Heart left ventricle (tissue), 16 donors: ENCODE measurements at regions of chr3 and their contacts with region 1.

Region 1: GRCh38 chr3:64533617-64534317 is 154.0 kb downstream of the ADAMTS9 start:
- DNase-seq: peak; percentile 83 to 87 (median 85)
- ATAC-seq: peak; percentile 96 to 97 (median 96)
- H3K4me3 ChIP-seq: peak overlapping the region in 3 of 12 donors; percentile 12 to 34 (median 14)
- H3K27ac ChIP-seq: peak overlapping the region in 4 of 12 donors; percentile 20 to 60 (median 34)
- H3K4me1 ChIP-seq: peaks cover 0 to 14% (median 2%) of the 10 kb centered on the region in 12 donors
- H3K27me3 ChIP-seq: no peaks in the 10 kb centered on the region
- CTCF ChIP-seq: peak; percentile 61 to 94 (median 89)
- POLR2A ChIP-seq: no peak

Region 2: GRCh38 chr3:64612082-64612860 is 78.5 kb after region 1 on chr3:
- intact Hi-C with region 1: loop called in 1 of 10 experiments (anchors 5 kb)
- DNase-seq: peak in 4 of 5 donors; percentile 30 to 54 (median 50)
- ATAC-seq: peak; percentile 87 to 97 (median 96)
- H3K4me3 ChIP-seq: peak overlapping the region in 2 of 12 donors; percentile 6 to 10
- H3K27ac ChIP-seq: peak overlapping the region; percentile 60 to 86 (median 76)
- H3K4me1 ChIP-seq: peaks cover 0 to 46% (median 26%) of the 10 kb centered on the region in 12 donors
- H3K27me3 ChIP-seq: no peaks in the 10 kb centered on the region
- CTCF ChIP-seq: no peak
- POLR2A ChIP-seq: no peak

Region 3: GRCh38 chr3:64890006-64890405 is 356.2 kb after region 1 on chr3:
- intact Hi-C with region 1: loop called in 2 of 10 experiments (anchors 10 kb)
- DNase-seq: peak; percentile 72 to 83 (median 81)
- ATAC-seq: peak; percentile 46 to 90 (median 74)
- H3K4me3 ChIP-seq: no peak overlapping the region
- H3K27ac ChIP-seq: peak overlapping the region; percentile 28 to 83 (median 62)
- H3K4me1 ChIP-seq: peaks cover 0 to 46% (median 30%) of the 10 kb centered on the region in 12 donors
- H3K27me3 ChIP-seq: no peaks in the 10 kb centered on the region
- CTCF ChIP-seq: no peak
- POLR2A ChIP-seq: no peak

Region 4: DNA sequence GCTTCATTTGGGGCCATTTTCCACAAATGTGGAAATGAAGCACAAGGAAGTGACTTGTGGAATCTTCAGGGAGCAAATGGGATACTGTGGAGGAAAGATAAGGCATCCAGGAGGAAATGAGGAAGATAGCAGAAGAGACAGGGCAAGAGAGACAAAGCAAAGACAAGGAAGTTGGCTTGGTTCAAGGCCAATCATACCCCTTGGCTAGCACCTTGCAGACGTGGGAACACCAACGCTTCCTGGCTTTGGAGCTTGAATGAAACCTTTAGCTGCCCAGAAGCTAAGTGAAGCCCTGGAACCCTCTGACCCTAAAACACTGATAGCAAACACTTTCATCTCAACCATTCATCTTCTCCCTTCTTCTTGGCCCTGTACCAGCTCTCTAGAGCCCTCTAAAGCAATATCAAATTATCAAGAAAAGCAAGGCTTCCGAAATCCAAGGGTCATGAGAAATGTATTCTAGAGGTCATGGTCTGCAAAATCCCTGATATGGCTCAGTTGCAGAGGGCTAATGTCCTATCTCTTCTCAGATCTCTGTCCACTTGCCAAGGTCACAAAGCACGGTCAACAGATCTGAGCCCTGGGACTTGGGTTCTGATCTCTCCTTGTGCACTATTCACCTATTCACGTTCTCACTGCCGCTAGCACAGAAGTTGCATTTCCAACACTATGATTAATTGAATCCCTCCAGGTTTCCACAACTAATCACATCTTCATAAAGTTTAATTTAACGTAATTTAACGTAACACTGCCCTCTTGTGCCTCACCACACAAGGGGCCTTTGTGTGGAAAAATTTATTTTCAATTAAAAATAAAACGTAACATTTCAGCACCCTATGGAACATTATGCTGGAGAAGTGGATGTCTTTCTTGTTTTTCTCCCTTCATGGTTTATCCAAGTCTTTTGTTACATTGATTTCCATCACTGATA is 711.6 kb after region 1 on chr3:
- intact Hi-C with region 1: loop called (anchors 1 to 5 kb)
- DNase-seq: no peak
- ATAC-seq: peak in 3 of 4 donors; percentile 27 to 57 (median 51)
- H3K4me3 ChIP-seq: no peak overlapping the region
- H3K27ac ChIP-seq: no peak overlapping the region
- H3K4me1 ChIP-seq: peaks cover 0 to 10% (median 1%) of the 10 kb centered on the region in 12 donors
- H3K27me3 ChIP-seq: no peaks in the 10 kb centered on the region
- CTCF ChIP-seq: peak; percentile 27 to 66 (median 55)
- POLR2A ChIP-seq: no peak

Region 5: DNA sequence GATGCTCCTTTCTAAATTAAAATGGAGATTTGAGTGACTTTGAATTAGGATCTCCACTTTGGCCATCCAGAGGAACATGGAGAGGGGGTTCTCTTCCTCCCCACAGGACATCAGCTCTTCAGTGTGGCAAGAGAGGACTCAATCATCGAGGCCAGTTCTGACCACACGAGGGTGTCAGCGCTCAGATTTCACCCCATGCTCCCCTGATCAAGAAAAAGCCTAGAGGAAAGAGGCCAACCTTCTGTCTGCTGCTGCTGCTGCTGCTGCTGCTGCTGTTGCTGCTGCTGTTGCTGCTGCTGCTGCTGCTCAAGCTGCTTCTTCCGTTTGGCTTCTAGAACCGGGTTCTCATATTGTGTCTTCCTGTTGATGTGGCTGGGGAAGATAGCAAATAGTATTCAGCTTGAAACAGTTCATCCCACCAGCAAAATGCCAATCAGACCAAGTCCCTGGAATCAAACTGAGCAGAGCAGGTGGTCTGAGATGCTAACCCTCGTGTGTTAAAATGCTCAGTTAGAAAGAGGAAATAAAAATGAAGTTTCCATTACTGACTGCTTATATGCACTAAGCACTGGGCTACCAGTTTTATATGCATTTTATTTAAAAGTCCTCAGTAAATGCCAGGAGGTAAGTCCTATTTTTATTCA is 906.0 kb after region 1 on chr3:
- intact Hi-C with region 1: loop called in 1 of 10 experiments (anchors 5 kb)
- DNase-seq: peak in 4 of 5 donors; percentile 47 to 69 (median 62)
- ATAC-seq: peak; percentile 80 to 91 (median 90)
- H3K4me3 ChIP-seq: no peak overlapping the region
- H3K27ac ChIP-seq: no peak overlapping the region
- H3K4me1 ChIP-seq: peaks cover 0 to 10% (median 6%) of the 10 kb centered on the region in 12 donors
- H3K27me3 ChIP-seq: no peaks in the 10 kb centered on the region
- CTCF ChIP-seq: peak; percentile 30 to 77 (median 64)
- POLR2A ChIP-seq: no peak

Region 6: DNA sequence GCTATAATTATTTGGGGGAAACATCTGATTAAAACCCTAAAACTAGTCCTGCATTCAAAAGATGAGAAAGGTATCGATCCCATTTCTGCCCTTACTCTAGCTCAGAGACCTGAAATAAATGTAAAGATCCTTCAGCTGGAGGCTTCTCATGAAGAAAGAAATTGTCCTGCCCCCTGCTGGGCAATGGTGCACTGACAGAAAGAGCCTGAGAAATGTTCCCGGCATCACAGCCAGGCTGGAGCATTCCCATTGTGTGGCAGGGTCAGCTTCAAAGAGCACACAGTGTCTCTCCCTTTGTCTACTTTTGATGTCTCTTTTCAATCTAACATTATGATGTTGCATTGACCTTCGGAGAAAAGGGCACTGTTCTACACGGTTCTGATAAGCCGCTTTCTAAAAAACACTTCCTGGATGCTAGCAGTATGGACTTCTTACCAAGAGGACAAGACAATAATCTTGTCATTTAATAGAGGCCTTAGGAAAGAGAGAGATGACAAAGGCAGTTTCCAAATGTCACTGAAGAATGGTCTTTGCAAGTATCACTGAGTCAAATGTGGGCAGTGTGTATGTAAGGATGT is 1217.4 kb after region 1 on chr3:
- intact Hi-C with region 1: loop called in 1 of 10 experiments (anchors 10 kb)
- DNase-seq: peak in 4 of 5 donors; percentile 20 to 52 (median 42)
- ATAC-seq: peak; percentile 62 to 71 (median 66)
- H3K4me3 ChIP-seq: no peak overlapping the region
- H3K27ac ChIP-seq: no peak overlapping the region
- H3K4me1 ChIP-seq: peaks cover 0 to 23% (median 1%) of the 10 kb centered on the region in 12 donors
- H3K27me3 ChIP-seq: no peaks in the 10 kb centered on the region
- CTCF ChIP-seq: peak; percentile 56 to 81 (median 66)
- POLR2A ChIP-seq: no peak